Prostate gland (tissue), 2 donors: ENCODE measurements at regions of chr6 and their contacts with region 1.

Region 1: DNA sequence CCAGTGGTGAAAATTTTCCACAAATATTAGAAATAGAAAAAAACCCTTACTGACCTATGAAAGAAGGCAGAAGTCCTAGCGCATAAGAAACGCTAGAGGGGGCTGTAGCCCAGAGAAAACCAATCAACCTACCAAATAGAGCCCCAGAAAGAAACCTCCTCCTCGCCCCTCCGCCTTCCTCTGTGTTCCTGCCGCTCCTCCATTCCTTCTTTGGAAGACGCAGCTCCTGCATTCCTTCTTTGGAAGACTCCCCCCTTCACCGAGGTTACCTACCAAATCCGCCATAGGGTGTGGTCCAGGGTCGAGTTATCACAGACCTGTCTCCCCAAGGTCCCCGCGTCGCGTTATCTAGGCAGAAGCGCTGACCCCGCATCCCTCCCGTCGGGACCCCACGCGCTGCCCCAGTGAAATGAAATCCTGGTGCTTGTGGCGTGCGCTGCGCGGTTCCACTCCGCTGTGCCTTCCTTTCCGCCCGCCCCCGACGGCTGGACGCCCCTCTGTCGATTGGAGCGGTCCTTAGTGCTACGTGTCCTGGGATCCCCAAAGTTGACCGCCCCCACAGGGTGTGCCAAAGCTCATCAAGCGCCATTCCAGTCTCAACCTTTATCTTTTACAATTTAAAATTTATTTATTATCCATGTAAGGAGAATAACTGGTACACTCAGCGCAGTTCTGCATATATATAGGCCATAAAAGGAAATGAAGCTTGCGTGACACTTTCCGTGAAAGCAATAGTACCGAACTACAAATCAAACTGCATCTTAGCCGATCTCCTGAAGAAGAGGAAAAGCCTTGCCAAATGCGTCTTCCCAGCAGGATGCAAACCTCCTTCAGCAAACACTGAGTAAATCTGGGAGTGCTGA is 13.0 kb downstream of the RPP21 start:
- DNase-seq: peak; percentile 15
- H3K4me3 ChIP-seq: peak overlapping the region in 1 of 2 donors; percentile 15
- H3K27ac ChIP-seq: no peak overlapping the region
- H3K4me1 ChIP-seq: no peaks in the 10 kb centered on the region
- H3K27me3 ChIP-seq: peaks cover 9% of the 10 kb centered on the region
- CTCF ChIP-seq: peak; percentile 10 to 49 (median 36)
- POLR2A ChIP-seq: no peak

Region 2: GRCh38 chr6:30304002-30304401 is 53.9 kb before region 1 on chr6:
- intact Hi-C with region 1: no loop called
- DNase-seq: no peak
- H3K4me3 ChIP-seq: no peak overlapping the region
- H3K27ac ChIP-seq: no peak overlapping the region
- H3K4me1 ChIP-seq: no peaks in the 10 kb centered on the region
- H3K27me3 ChIP-seq: no peaks in the 10 kb centered on the region
- CTCF ChIP-seq: no peak
- POLR2A ChIP-seq: no peak

Region 3: GRCh38 chr6:30386166-30386565 is 28.3 kb after region 1 on chr6:
- intact Hi-C with region 1: no loop called
- DNase-seq: no peak
- H3K4me3 ChIP-seq: no peak overlapping the region
- H3K27ac ChIP-seq: no peak overlapping the region
- H3K4me1 ChIP-seq: no peaks in the 10 kb centered on the region
- H3K27me3 ChIP-seq: no peaks in the 10 kb centered on the region
- CTCF ChIP-seq: no peak
- POLR2A ChIP-seq: no peak

Region 4: DNA sequence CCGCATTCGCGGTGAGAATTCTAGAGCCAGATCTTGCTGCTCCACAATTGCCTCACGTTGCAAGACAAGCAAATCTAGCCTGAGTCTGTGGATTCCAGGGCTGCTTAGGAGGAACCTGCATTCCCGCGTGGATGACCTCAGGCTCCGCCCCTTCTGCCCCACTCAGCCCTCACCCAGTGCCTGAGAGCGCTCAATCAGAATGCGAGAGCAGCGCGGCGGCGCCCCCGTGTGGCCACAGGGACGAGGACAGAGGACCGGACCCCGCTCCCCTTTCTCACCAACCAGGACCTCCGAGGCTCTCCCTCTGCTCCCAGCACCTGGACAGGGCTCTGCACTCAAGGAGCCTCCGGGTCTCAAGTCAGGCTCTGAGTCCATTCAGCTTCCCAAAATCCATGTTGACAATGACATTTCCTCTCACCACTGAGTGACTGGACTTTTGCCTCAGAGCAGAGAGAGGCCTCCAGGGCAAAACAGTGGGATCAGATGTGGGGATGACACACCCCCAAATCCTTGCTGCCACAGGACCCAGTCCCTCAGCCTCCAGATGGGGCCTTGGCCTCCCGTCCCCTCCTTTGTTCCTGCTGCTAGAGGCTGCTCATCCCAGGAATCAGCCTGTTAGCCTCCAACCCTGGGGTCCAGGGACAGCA is 39.0 kb after region 1 on chr6:
- intact Hi-C with region 1: loop called (anchors 2 kb)
- DNase-seq: peak; percentile 46
- H3K4me3 ChIP-seq: no peak overlapping the region
- H3K27ac ChIP-seq: no peak overlapping the region
- H3K4me1 ChIP-seq: no peaks in the 10 kb centered on the region
- H3K27me3 ChIP-seq: no peaks in the 10 kb centered on the region
- CTCF ChIP-seq: peak in 3 of 4 experiments; percentile 57 to 71 (median 64)
- POLR2A ChIP-seq: no peak

Region 5: DNA sequence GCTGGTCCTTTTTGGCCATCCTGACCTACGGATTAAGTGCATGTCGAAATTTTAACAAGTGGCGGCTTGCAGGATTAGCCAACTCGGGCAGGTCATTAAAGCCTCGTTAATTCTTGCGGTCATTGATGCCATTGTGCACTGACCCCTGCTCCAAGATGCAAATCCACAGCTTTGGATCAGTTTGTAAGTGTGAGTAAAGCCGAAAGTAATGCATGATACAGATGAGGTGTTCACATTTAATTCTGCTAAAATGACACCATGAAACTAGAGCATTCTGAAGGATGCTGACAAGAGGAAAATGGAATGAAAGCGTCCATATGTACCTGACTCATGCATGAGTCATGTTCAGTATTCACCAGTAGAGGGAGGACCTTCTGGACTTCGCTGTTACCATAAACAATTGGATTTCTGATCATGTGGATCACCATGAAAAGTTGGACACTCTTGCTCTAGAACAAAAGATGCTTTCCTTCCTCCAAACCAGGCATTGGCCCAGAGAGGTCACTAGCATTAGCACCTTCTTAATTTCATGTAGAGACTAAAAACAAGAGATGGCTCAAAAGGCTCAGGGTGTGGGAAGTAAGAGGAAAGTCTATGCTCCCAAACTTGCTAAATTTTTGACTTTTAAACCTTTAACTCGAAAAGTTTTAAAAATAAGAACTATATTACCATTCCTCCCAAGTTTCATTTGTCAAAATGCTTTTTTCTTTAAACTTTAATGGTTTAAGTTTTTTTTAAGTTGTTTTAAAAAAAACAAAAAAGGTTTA is 700.4 kb after region 1 on chr6:
- intact Hi-C with region 1: no loop called
- DNase-seq: no peak
- H3K4me3 ChIP-seq: no peak overlapping the region
- H3K27ac ChIP-seq: no peak overlapping the region
- H3K4me1 ChIP-seq: no peaks in the 10 kb centered on the region
- H3K27me3 ChIP-seq: no peaks in the 10 kb centered on the region
- CTCF ChIP-seq: peak in 3 of 4 experiments; percentile 35 to 63 (median 61)
- POLR2A ChIP-seq: no peak